T-cell (primary cell): ENCODE measurements at regions of chr10 and their contacts with region 1.

Region 1: GRCh38 chr10:21278491-21279239 is 246.8 kb downstream of the SKIDA1 start:
- DNase-seq: peak in 34 of 35 experiments; percentile 4 to 68 (median 40)
- ATAC-seq: peak in 2 of 4 experiments; percentile 34 to 61
- H3K4me3 ChIP-seq: no peak overlapping the region
- H3K4me3 Mint-ChIP-seq: no peak overlapping the region
- H3K27ac ChIP-seq: no peak overlapping the region
- H3K27ac Mint-ChIP-seq: no peak overlapping the region
- H3K4me1 ChIP-seq: no peaks in the 10 kb centered on the region
- H3K4me1 Mint-ChIP-seq: peaks cover 0 to 7% (median 0%) of the 10 kb centered on the region in 3 donors
- H3K27me3 ChIP-seq: peaks cover 0 to 8% of the 10 kb centered on the region in 2 experiments
- H3K27me3 Mint-ChIP-seq: peaks cover 7 to 12% of the 10 kb centered on the region in 2 donors

Region 2: DNA sequence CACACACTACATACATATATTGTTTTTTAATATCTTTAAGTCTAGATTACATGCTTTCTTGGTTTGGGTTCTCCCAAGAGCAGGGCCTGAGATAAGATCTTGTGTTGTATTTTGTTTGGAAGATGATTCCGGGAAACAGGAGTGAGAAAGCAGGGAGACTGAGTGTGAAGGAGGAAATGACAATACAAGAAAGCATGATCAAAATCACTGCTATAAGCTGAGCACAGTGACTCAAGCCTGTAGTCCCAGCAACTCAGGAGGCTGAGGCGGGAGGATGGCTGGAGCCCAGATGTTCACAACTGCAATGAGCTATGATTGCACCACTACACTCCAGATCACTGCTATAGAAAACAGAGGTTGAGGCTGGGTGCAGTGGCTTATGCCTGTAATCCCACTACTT is 20.7 kb before region 1 on chr10:
- CTCF ChIA-PET with region 1: interaction called in 1 of 2 experiments, 10 read pairs
- POLR2A ChIA-PET with region 1: no interaction called
- DNase-seq: no peak
- ATAC-seq: no peak
- H3K4me3 ChIP-seq: no peak overlapping the region
- H3K4me3 Mint-ChIP-seq: no peak overlapping the region
- H3K27ac ChIP-seq: no peak overlapping the region
- H3K27ac Mint-ChIP-seq: no peak overlapping the region
- H3K4me1 ChIP-seq: no peaks in the 10 kb centered on the region
- H3K4me1 Mint-ChIP-seq: no peaks in the 10 kb centered on the region
- H3K27me3 ChIP-seq: peaks cover 0 to 8% of the 10 kb centered on the region in 2 experiments
- H3K27me3 Mint-ChIP-seq: peaks cover 5 to 8% of the 10 kb centered on the region in 2 donors

Region 3: DNA sequence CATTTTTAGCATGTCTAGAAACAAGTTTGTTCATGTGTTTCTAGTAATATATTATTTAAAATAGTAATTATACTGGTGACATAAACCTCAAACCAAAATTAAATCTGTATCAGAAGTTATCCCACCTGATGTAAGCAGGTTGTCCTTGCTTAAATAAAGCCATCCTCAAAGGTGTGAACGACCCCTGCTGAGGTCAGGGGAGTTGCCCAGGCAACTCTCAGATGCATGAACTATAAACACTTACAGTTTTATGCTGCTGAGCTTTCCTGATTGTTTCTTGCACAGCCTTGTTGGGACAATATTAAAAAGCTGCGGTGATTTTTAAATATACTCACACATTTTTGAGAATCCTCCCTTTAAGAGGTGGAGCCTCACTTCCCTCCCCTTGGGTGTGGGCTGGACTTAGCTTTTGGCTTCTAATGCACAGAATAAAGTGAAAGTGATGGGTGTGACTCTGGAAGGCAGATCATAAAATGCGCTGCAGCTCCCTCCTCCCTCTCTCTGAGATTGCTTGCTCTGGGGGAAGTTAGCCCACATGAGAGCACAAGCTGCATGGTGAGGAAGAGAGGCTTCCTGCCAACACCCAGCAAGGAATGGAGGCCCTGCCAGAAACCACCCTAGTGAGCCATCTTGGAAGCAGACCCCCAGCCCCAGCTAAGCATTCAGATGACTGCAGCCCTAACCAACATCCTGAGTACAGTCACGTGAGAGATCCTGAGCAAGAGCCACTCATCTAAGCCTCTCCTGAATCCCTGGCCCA is 94.2 kb after region 1 on chr10:
- CTCF ChIA-PET with region 1: no interaction called
- POLR2A ChIA-PET with region 1: no interaction called
- DNase-seq: peak in 34 of 35 experiments; percentile 2 to 62 (median 23)
- ATAC-seq: peak; percentile 85 to 99 (median 91)
- H3K4me3 ChIP-seq: peak overlapping the region in 1 of 2 donors; percentile 4
- H3K4me3 Mint-ChIP-seq: peak overlapping the region in 2 of 3 donors; percentile 60 to 68
- H3K27ac ChIP-seq: no peak overlapping the region
- H3K27ac Mint-ChIP-seq: peak overlapping the region; percentile 76 to 83
- H3K4me1 ChIP-seq: peaks cover 11 to 12% of the 10 kb centered on the region in 2 experiments
- H3K4me1 Mint-ChIP-seq: peaks cover 8 to 14% (median 9%) of the 10 kb centered on the region in 3 donors
- H3K27me3 ChIP-seq: no peaks in the 10 kb centered on the region
- H3K27me3 Mint-ChIP-seq: no peaks in the 10 kb centered on the region

Region 4: GRCh38 chr10:21919906-21920305 is 641.2 kb after region 1 on chr10:
- CTCF ChIA-PET with region 1: no interaction called
- POLR2A ChIA-PET with region 1: no interaction called
- DNase-seq: no peak
- ATAC-seq: no peak
- H3K4me3 ChIP-seq: no peak overlapping the region
- H3K4me3 Mint-ChIP-seq: no peak overlapping the region
- H3K27ac ChIP-seq: no peak overlapping the region
- H3K27ac Mint-ChIP-seq: no peak overlapping the region
- H3K4me1 ChIP-seq: no peaks in the 10 kb centered on the region
- H3K4me1 Mint-ChIP-seq: no peaks in the 10 kb centered on the region
- H3K27me3 ChIP-seq: no peaks in the 10 kb centered on the region
- H3K27me3 Mint-ChIP-seq: no peaks in the 10 kb centered on the region